ENCODE measurements at regions of chr15 and their contacts with region 1.

Region 1: GRCh38 chr15:41832875-41833274 is 5.0 kb downstream of the JMJD7 start:
- DNase-seq: no peak
- H3K4me3 ChIP-seq: no peak overlapping the region
- H3K27ac ChIP-seq: no peak overlapping the region
- H3K4me1 ChIP-seq: peaks cover 0 to 8% of the 10 kb centered on the region in 2 donors
- H3K27me3 ChIP-seq: no peaks in the 10 kb centered on the region
- CTCF ChIP-seq: no peak
- POLR2A ChIP-seq: no peak

Region 2: DNA sequence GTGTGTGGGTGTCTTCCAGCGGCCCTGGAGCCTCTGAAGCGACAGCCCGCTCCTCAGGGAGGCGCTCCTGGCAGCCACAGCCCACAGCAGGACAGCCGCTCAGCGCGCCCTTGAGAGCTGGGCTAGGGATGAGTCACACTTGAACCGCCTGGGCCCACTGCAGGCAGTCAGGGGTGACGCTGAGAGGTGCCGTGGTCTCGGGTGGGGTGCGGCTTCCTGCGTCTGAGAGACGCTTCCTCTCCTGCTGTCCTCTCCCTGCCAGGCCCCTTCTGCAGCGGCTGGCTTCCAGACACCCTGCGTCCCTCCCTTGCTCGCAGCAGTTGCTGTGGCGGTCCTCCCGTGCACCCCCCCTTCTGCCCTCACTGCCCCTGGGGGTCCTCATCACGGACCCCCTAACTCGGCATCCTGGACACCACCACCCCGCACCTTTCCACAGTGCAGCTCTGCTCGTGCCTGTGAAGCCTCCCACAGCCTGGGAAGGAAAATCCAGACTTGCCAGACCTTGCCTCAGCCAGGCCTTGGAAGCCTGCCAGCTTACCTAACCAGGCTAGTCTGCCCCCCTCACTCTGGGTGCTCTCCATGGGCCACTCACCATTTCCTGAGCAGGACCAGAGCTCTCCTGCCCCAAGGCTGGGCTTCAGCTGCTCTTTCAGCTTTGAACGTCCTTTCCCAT is 62.1 kb after region 1 on chr15:
- intact Hi-C with region 1: loop called in 1 of 2 experiments (anchors 5 kb)
- DNase-seq: peak; percentile 84 to 94 (median 89)
- H3K4me3 ChIP-seq: peak overlapping the region in 1 of 4 donors; percentile 32
- H3K27ac ChIP-seq: peak overlapping the region in 3 of 5 donors; percentile 50 to 78 (median 52)
- H3K4me1 ChIP-seq: peaks cover 12 to 18% of the 10 kb centered on the region in 2 donors
- H3K27me3 ChIP-seq: no peaks in the 10 kb centered on the region
- CTCF ChIP-seq: peak in 1 of 6 experiments; percentile 12
- POLR2A ChIP-seq: no peak